Activated T-helper 1 cell treated with anti-CD3 and anti-CD28 coated beads, Interleukin-12 subunit alpha, Interleukin-12 subunit beta, Interleukin-2, Interleukin-4 antibody, amounts not matched to agents 30 ng/mL and 10 ng/mL and 1 ng/mL, durations not matched to agents 14 hours and 24 hours and 36 hours (primary cell): ENCODE measurements at regions of chr1 and their contacts with region 1.

Region 1: GRCh38 chr1:115062542-115063011 is 26.7 kb downstream of the TSPAN2 start:
- DNase-seq: peak; percentile 85
- H3K4me3 Mint-ChIP-seq: peak overlapping the region; percentile 38
- H3K27ac Mint-ChIP-seq: peak overlapping the region; percentile 88
- H3K4me1 Mint-ChIP-seq: peaks cover 36% of the 10 kb centered on the region
- H3K27me3 Mint-ChIP-seq: peaks cover 7% of the 10 kb centered on the region

Region 2: GRCh38 chr1:115089420-115090185 is 27.0 kb after region 1 on chr1 and contains the start of gene TSPAN2:
- intact Hi-C with region 1: loop called (anchors 2 kb)
- DNase-seq: peak; percentile 21
- H3K4me3 Mint-ChIP-seq: peak within 1 kb of the TSS; percentile 81
- H3K27ac Mint-ChIP-seq: no peak within 1 kb of the TSS
- H3K4me1 Mint-ChIP-seq: peaks cover 23% of the 10 kb centered on the region
- H3K27me3 Mint-ChIP-seq: peaks cover 30% of the 10 kb centered on the region
- total RNA-seq, gene TSPAN2: 0.34 and 0.44 TPM in 2 replicates

Region 3: DNA sequence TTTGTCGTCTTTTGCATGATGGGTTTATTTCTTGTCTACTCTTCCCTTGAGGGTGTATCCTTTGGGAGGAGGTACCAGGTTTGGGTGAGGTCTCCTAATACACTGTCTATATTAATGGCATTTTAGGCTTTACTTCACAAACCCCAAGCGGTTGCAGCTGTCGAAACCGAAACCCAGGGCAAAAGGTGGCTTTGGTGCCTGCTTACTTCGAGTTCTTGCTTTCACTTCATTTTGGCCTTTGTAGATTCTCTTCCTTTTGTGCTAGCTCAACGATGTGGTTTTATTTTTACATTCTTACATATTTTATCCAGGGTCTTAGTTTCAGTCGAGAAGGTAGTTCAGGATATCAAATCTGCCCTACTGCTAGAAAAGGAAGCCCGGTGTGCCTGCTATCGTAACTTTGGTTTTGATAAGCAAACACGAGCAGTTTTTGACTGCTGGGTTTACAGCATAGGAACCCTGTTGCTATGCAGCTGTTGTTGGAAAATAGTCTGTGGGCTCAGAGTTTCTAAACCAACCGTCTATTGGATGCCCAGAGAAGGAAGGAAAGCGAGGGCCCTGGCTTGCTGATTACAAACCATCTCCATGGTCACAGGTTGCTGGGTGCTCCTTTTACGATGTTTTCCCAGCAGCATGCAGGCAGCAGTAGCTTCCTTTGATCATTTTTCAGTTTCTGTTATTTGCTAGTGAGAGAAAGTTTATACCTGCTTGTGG is 36.6 kb after region 1 on chr1:
- intact Hi-C with region 1: loop called (anchors 1 kb)
- DNase-seq: peak; percentile 70
- H3K4me3 Mint-ChIP-seq: peak overlapping the region; percentile 89
- H3K27ac Mint-ChIP-seq: peak overlapping the region; percentile 98
- H3K4me1 Mint-ChIP-seq: peaks cover 30% of the 10 kb centered on the region
- H3K27me3 Mint-ChIP-seq: peaks cover 16% of the 10 kb centered on the region

Region 4: DNA sequence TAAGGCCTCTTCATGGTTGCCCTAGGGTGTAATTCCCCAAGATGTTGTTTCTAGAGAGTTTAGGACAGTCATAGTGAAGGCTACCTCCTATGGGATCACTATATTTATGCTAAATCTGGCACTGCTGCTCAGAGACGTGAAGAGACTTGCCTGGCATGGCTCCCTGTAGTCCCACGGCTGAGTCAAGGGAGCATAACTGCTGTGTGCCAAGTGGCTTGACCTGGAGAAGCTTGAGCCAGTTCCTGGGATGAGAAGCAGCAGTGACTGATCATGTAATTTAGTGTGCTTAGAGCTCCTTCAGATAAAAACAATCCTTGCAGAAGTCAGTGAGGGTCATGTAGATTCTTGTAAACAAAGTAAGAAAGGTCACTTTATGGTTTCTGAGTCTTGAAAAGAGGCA is 95.6 kb after region 1 on chr1:
- intact Hi-C with region 1: no loop called
- DNase-seq: no peak
- H3K4me3 Mint-ChIP-seq: no peak overlapping the region
- H3K27ac Mint-ChIP-seq: no peak overlapping the region
- H3K4me1 Mint-ChIP-seq: no peaks in the 10 kb centered on the region
- H3K27me3 Mint-ChIP-seq: peaks cover under 1% of the 10 kb centered on the region

Region 5: DNA sequence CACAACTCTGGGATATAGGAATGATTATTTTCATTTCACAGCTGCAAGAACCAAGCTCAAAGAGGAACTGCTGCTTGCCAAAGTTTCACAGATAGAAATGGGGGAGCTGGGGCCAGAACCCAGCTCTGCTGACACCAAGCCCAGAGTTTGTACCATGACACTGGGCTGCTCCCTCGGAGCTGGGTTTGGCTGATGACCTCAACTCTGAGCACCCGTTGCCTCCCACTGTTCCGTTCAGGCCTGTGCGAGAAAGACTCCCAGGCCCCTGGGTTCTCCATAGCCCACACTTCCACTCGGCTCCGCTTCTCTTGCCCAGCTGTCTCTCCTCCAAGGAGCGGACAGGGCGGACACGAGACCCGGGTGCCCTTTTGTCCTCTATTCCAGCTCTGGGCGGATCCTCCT is 220.2 kb after region 1 on chr1:
- intact Hi-C with region 1: no loop called
- DNase-seq: no peak
- H3K4me3 Mint-ChIP-seq: no peak overlapping the region
- H3K27ac Mint-ChIP-seq: no peak overlapping the region
- H3K4me1 Mint-ChIP-seq: no peaks in the 10 kb centered on the region
- H3K27me3 Mint-ChIP-seq: no peaks in the 10 kb centered on the region